Endothelial cell of umbilical vein (primary cell): ENCODE measurements at regions of chr13 and their contacts with region 1.

Region 1: GRCh38 chr13:100721885-100722512 is 47.4 kb upstream of the TMTC4 start:
- DNase-seq: peak; percentile 55
- H3K4me3 ChIP-seq: no peak overlapping the region
- H3K27ac ChIP-seq: no peak overlapping the region
- H3K4me1 ChIP-seq: no peaks in the 10 kb centered on the region
- H3K27me3 ChIP-seq: no peaks in the 10 kb centered on the region
- CTCF ChIP-seq: peak; percentile 64 to 69
- POLR2A ChIP-seq: no peak

Region 2: DNA sequence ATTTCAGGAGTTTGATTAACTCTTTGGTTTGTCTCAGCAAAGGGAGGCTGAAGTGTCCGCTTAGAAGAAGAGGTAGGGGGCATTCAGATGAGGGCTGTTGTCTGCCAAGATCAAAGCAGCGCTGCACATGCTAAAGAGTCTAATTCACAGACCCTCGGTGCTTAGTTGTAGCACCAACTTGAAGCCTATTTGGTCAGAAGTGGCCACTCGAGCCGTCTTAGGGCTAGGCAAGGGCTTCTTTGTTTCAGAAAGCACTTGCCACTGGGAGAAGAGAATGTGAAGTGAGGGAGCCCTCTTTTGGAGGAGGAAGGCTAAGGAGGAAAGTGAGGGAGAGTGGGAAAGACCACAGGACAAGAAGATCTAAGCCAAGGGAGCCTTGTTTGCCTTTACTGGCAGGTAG is 266.0 kb after region 1 on chr13:
- CTCF ChIA-PET with region 1: interaction called, 17 read pairs
- POLR2A ChIA-PET with region 1: no interaction called
- dilution Hi-C with region 1: no loop called
- intact Hi-C with region 1: loop called (anchors 1 kb)
- DNase-seq: peak; percentile 9
- H3K4me3 ChIP-seq: no peak overlapping the region
- H3K27ac ChIP-seq: no peak overlapping the region
- H3K4me1 ChIP-seq: no peaks in the 10 kb centered on the region
- H3K27me3 ChIP-seq: no peaks in the 10 kb centered on the region
- CTCF ChIP-seq: no peak
- POLR2A ChIP-seq: no peak

Region 3: DNA sequence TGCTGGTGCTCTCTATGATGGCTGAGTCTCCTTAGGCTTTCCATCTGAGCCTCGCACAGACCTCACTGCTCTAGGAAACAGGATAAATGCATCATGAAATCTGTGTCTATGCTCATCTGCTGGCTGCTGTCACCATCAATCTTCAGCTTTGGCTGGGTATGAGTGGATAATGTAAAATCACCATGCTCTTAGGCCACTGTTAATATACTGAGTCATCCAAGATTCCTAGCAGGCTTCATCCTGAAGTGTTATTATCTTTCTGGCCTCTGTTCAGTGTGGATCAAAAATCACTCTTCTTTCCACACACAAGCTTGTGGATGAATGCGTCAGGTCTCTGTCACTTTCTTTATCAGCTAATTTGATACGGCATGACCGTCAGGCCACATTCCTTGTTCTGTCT is 376.9 kb after region 1 on chr13:
- CTCF ChIA-PET with region 1: interaction called, 57 read pairs
- POLR2A ChIA-PET with region 1: no interaction called
- dilution Hi-C with region 1: no loop called
- intact Hi-C with region 1: loop called (anchors 1 kb)
- DNase-seq: no peak
- H3K4me3 ChIP-seq: no peak overlapping the region
- H3K27ac ChIP-seq: no peak overlapping the region
- H3K4me1 ChIP-seq: no peaks in the 10 kb centered on the region
- H3K27me3 ChIP-seq: no peaks in the 10 kb centered on the region
- CTCF ChIP-seq: no peak
- POLR2A ChIP-seq: no peak

Region 4: GRCh38 chr13:101127741-101128353 is 405.8 kb after region 1 on chr13:
- CTCF ChIA-PET with region 1: interaction called, 66 read pairs
- POLR2A ChIA-PET with region 1: no interaction called
- dilution Hi-C with region 1: no loop called
- intact Hi-C with region 1: loop called (anchors 1 kb)
- DNase-seq: peak; percentile 66
- H3K4me3 ChIP-seq: no peak overlapping the region
- H3K27ac ChIP-seq: no peak overlapping the region
- H3K4me1 ChIP-seq: no peaks in the 10 kb centered on the region
- H3K27me3 ChIP-seq: no peaks in the 10 kb centered on the region
- CTCF ChIP-seq: peak; percentile 61 to 63
- POLR2A ChIP-seq: no peak

Region 5: GRCh38 chr13:101170306-101170705 is 448.3 kb after region 1 on chr13:
- CTCF ChIA-PET with region 1: no interaction called
- POLR2A ChIA-PET with region 1: no interaction called
- dilution Hi-C with region 1: no loop called
- intact Hi-C with region 1: no loop called
- DNase-seq: no peak
- H3K4me3 ChIP-seq: no peak overlapping the region
- H3K27ac ChIP-seq: no peak overlapping the region
- H3K4me1 ChIP-seq: no peaks in the 10 kb centered on the region
- H3K27me3 ChIP-seq: no peaks in the 10 kb centered on the region
- CTCF ChIP-seq: no peak
- POLR2A ChIP-seq: no peak

Region 6: DNA sequence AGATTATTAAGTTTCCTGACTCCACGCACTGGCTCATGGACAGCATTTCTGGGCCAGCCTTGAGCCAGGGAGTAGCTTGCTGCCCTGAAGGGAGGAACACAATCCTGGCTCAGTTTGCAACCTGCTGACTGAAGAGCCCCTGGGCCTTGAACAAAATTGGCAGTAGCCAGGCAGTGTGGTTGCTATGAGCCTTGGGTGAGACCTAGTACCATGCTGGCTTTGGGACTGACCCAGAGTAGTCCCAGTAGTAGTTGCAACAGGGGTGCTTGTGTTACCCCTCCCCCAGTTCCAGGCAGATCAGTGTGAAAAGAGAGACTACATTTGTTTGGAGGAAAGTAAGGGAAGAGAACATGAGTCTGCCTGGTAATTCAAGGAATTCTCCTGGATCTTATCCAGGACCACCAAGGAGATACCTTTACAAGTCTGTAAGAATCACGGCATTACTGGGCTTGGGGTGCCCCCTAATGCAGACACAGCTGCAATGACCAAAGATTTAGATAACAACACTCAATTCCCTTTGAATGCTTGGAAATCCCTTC is 752.5 kb after region 1 on chr13:
- CTCF ChIA-PET with region 1: no interaction called
- POLR2A ChIA-PET with region 1: no interaction called
- dilution Hi-C with region 1: no loop called
- intact Hi-C with region 1: loop called (anchors 5 kb)
- DNase-seq: peak; percentile 80
- H3K4me3 ChIP-seq: no peak overlapping the region
- H3K27ac ChIP-seq: no peak overlapping the region
- H3K4me1 ChIP-seq: peaks cover 9% of the 10 kb centered on the region
- H3K27me3 ChIP-seq: no peaks in the 10 kb centered on the region
- CTCF ChIP-seq: peak; percentile 40 to 44
- POLR2A ChIP-seq: no peak